ENCODE measurements at regions of chr2 and their contacts with region 1.

Region 1: DNA sequence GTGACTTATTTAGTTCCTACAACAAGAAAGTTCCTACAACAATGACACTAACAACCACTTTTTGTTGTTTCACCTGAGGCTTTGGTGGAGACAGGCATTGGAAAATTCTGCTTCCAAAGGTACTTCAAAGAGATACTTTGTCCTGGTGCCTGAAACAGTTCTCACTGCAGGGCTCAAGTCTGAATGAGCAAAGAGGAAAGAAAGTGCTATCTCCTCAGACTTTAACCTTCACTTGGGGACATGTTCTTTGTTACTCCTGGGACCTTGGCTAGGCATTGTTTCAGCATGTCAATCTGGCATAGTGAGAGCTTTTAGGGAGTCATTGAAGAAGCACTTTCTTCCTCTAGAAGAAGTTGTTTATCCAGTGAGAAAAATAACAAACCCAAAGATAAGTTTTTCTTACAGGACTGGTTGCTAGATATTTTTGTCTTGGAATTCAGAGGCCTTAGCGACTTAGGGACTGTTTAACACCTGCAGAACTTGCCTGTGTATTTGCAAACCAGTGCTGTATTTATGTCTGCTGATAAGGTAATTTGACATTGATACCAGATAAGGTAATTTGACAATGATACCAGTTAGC is 12.2 kb downstream of the MDH1 start:
- DNase-seq: no peak
- H3K4me3 ChIP-seq: no peak overlapping the region
- H3K27me3 ChIP-seq: no peaks in the 10 kb centered on the region
- CTCF ChIP-seq: no peak

Region 2: GRCh38 chr2:63588385-63589147 is 12.4 kb before region 1 on chr2 and contains the starts of genes MDH1 and WDPCP:
- CTCF ChIA-PET with region 1: interaction called, 5 read pairs
- POLR2A ChIA-PET with region 1: interaction called, 13 read pairs
- DNase-seq: peak; percentile 98
- H3K4me3 ChIP-seq: peak within 1 kb of the TSS; percentile 87
- H3K27me3 ChIP-seq: no peaks in the 10 kb centered on the region
- CTCF ChIP-seq: no peak
- polyA plus RNA-seq, gene MDH1: 166 and 233 TPM in 2 replicates
- polyA plus RNA-seq, gene WDPCP: 4.2 and 4.4 TPM in 2 replicates

Region 3: DNA sequence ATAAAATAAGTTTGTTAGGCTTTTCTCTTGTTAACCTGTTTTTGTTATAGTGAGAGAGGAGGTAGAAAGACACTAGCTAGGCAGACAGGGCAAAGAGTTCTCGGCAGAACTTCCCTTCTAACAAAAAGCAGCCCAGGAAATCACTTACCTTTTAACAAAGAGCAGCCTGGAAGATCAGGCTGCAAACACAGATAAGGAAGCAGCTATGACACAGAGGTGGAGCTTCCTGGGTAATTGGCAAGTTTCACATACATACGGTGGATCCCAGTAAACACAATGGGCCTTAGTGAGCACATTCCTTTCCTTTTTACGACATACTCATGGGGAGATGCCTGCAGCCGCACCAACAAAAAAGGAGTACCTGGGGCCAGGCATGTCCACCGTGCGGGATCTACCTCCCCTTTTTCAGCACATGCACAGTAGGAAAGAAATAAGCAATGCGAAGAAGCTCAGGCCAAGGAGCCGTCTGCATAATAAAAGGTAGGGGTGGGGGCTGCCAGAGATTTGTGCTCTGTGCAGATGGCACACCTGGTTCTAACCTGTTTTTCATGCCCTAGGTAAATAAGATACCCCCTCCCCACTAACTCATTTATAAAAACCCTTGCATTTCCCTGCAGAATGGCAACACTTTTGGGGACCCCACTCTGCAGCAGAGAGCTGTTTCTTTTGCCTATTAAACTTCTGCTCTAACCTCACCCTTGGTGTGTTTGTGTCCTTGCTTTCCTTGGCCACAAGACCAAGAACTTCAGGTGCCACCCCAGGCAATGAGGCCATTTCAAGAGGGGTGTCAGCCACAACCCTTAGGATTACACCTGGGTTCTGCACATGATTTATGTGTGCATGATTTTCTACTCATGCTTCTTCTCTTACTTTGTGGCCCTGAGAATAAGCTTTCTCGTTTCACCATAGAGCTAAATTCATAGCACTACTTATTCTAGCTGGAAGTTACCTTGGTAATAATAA is 14.3 kb after region 1 on chr2:
- CTCF ChIA-PET with region 1: no interaction called
- POLR2A ChIA-PET with region 1: no interaction called
- DNase-seq: peak; percentile 13
- H3K4me3 ChIP-seq: no peak overlapping the region
- H3K27me3 ChIP-seq: no peaks in the 10 kb centered on the region
- CTCF ChIP-seq: no peak

Measured in BJ (cell line).